A673 (cell line): ENCODE measurements at regions of chr1 and their contacts with region 1.

Region 1: DNA sequence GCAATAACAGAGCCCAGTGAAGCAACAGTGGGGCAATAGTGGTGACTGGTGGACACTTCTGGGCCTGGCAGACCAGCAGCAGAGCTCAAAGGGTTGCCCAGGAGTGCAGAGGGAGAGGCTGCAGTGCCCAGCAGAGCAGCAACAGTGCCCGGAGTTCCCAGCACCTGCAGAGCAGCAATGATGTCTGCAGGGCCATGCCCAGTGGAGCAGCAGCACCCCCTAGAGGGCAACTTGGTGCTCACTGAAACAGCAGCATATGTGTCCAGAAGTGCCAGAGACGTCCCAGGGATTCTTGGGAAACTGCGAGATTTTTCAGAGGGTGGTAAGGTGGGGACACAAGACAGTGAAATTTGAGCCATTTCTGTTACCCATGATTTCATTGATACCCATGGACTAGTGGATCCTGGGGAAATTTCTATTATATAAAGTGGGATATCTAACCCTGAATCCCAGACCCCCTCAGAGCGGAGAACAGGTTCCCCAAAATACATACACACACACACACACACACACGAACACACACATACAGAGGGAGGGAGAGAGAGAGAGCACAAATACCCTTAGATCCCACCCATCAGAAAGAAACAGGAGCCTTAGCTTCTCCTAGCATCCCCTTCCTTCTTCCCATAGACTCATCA is 156.9 kb upstream of the GJB5 start:
- DNase-seq: peak; percentile 73
- H3K4me3 ChIP-seq: no peak overlapping the region
- H3K27ac ChIP-seq: no peak overlapping the region
- H3K4me1 ChIP-seq: no peaks in the 10 kb centered on the region
- H3K27me3 ChIP-seq: no peaks in the 10 kb centered on the region
- CTCF ChIP-seq: peak; percentile 90

Region 2: DNA sequence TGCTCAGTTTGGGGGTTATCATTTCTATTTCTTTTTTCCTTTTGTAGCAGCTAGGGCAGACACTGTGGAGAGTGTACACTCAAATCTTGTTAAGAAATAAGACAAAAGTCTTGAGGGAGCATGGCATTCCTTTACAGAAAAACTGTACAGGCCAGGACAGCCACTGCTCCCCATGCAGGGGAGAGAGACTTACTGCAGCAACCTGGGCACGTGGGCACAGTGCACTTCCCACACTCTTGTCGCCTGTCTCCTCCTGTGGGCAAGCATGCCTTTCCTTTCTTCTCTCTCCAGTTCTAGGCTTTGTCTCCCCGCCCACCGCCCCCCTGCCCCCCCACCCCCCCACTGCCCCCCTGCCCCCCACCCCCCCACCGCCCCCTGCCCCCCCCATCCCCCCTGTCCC is 1219.0 kb before region 1 on chr1:
- CTCF ChIA-PET with region 1: no interaction called
- POLR2A ChIA-PET with region 1: no interaction called
- intact Hi-C with region 1: no loop called
- DNase-seq: no peak
- H3K4me3 ChIP-seq: no peak overlapping the region
- H3K27ac ChIP-seq: no peak overlapping the region
- H3K4me1 ChIP-seq: peaks cover 16% of the 10 kb centered on the region
- H3K27me3 ChIP-seq: no peaks in the 10 kb centered on the region
- CTCF ChIP-seq: 0 out of 2 replicates have a peak, but pooled peaks have one; percentile 14

Region 3: DNA sequence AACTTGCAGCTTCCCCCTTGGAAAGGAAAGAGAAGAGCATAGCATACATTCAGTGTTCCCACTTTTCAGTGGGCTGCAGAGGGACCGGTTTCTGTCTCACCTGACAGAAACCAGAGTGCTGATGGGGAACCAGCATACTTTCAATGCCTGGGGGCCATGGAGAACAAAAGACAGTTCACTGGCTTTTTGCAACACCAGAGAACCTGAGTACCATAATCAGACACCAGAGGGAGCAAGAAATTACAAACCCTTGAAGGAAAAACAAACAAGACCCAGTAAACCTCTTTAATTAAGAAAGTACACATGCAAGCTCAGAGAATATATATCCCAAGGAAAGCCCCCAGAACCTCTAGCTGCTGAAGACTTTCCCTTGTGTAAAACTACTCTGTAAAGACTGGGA is 484.1 kb before region 1 on chr1:
- CTCF ChIA-PET with region 1: no interaction called
- POLR2A ChIA-PET with region 1: no interaction called
- intact Hi-C with region 1: loop called (anchors 5 kb)
- DNase-seq: peak; percentile 39
- H3K4me3 ChIP-seq: no peak overlapping the region
- H3K27ac ChIP-seq: no peak overlapping the region
- H3K4me1 ChIP-seq: no peaks in the 10 kb centered on the region
- H3K27me3 ChIP-seq: no peaks in the 10 kb centered on the region
- CTCF ChIP-seq: peak; percentile 46

Region 4: GRCh38 chr1:34162852-34163766 is 434.9 kb before region 1 on chr1:
- CTCF ChIA-PET with region 1: no interaction called
- POLR2A ChIA-PET with region 1: no interaction called
- intact Hi-C with region 1: loop called (anchors 10 kb)
- DNase-seq: peak; percentile 85
- H3K4me3 ChIP-seq: peak overlapping the region; percentile 49
- H3K27ac ChIP-seq: no peak overlapping the region
- H3K4me1 ChIP-seq: peaks cover 10% of the 10 kb centered on the region
- H3K27me3 ChIP-seq: peaks cover 63% of the 10 kb centered on the region
- CTCF ChIP-seq: peak; percentile 78

Region 5: DNA sequence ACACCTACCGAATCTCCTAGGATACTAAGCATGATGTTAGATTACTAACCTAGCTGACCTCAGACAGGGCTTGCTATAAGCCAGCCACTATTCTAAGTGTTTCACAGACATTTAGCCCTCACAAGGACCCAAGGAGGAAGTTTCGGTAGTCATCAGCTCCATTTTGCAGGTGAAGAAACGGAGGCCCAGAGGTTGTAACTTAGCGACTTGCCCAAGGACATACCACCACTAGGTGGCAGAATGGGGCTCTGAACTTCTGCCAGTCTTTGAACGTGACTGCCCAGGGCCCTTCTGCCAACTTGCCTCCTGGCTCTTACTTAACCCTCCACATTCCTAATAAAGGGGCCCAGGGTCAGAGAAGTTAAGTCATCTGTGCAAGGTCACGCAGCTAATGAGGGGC is 137.8 kb before region 1 on chr1:
- CTCF ChIA-PET with region 1: no interaction called
- POLR2A ChIA-PET with region 1: no interaction called
- intact Hi-C with region 1: loop called (anchors 1 kb)
- DNase-seq: peak; percentile 55
- H3K4me3 ChIP-seq: no peak overlapping the region
- H3K27ac ChIP-seq: no peak overlapping the region
- H3K4me1 ChIP-seq: no peaks in the 10 kb centered on the region
- H3K27me3 ChIP-seq: no peaks in the 10 kb centered on the region
- CTCF ChIP-seq: peak; percentile 76

Region 6: DNA sequence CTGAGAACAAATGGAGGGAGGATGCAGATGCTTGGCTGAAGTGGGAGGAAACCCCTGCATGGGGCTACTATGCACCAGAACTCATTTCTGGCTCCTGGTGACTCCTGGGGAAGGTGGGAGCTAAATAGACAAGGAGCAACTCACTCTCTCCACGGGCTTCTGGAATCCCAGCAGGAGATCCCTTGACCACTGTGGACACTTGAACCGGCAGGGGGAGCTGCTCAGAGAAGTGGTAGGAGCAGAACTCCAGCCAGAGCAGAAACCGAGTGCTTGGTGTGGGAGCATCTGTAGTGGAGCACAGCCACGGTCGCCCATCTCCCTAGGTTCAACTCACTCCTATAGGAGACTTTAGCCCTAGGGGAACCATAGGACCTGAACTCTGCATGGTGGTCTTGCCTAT is 48.8 kb before region 1 on chr1:
- CTCF ChIA-PET with region 1: no interaction called
- POLR2A ChIA-PET with region 1: no interaction called
- intact Hi-C with region 1: no loop called
- DNase-seq: peak; percentile 20
- H3K4me3 ChIP-seq: no peak overlapping the region
- H3K27ac ChIP-seq: no peak overlapping the region
- H3K4me1 ChIP-seq: no peaks in the 10 kb centered on the region
- H3K27me3 ChIP-seq: no peaks in the 10 kb centered on the region
- CTCF ChIP-seq: peak; percentile 34